Activated CD8-positive, alpha-beta T cell treated with anti-CD3 and anti-CD28 coated beads for 36 hours (primary cell): ENCODE measurements at regions of chr1 and their contacts with region 1.

Region 1: DNA sequence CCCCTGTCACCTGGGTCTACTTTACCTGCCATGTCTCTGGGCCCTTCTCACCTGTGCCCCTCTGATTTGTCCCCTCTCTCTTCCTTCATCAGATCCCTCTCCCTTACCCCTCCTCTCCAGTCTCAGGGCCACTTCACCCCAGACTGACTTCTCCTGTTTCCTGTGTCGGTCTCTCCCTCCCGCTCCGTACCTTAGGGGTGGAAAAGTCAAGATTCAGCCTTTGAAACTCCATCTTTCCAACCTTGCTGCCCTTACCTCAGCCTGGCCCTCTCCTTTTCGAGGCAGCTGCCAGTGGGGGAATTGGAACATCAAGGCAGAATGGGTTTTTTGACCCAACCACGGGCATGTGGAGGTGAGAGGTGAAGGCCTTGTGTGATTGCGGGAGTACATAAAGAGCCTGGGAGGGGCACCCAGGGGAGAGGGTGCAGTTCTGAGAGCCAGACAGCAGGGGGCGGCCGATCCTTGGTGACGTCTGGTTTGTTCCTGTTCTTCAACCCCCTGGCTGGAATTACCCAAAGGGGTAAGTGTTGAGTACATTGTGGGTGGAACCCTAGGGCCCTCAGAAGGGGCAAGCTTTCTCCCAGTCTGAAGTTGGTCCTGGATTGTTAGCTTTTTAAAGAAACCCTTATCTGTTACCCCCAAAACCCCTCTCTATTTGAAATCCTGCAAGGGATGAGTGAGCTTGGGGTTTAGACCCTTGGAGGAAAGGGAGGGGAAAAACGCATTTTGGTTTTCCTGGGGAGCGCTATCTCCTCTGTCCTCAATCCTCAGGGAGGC is 12.3 kb upstream of the DMBX1 start:
- DNase-seq: peak; percentile 86
- ATAC-seq: peak; percentile 99
- H3K4me3 Mint-ChIP-seq: no peak overlapping the region
- H3K27ac Mint-ChIP-seq: no peak overlapping the region
- H3K4me1 Mint-ChIP-seq: no peaks in the 10 kb centered on the region
- H3K27me3 Mint-ChIP-seq: peaks cover 17% of the 10 kb centered on the region
- CTCF ChIP-seq: peak; percentile 92

Region 2: DNA sequence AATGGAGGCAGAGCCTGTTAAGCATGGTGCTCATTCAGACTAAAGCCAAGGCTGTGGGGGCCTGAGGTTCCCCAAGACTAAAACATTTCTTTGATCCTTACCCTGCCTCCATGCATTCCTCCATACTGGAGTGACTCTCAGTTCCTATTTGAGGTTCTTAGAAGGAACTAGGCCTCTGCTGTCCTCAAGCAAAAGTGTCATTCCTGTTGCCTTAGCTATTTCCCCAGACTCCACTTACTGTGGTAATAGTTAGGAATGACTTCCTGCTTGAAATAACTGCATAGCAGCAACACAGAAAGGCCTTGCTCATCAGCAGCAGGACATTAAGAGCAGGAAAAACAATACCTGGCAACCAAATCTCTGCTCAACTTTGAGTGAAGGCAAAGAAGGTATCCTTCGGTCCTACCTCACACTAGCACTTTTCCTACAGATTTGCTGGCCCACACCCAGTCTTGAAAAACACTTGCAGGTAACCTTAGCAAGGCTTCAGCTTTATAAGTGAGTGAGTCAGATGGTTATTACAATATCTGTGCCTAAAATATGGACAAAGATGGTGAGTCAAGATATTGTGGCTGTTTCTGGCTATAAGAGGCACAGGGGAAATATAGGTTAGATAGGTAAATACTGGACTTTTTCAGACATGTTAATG is 188.7 kb before region 1 on chr1:
- CTCF ChIA-PET with region 1: no interaction called
- POLR2A ChIA-PET with region 1: no interaction called
- intact Hi-C with region 1: no loop called
- DNase-seq: no peak
- ATAC-seq: no peak
- H3K4me3 Mint-ChIP-seq: no peak overlapping the region
- H3K27ac Mint-ChIP-seq: peak overlapping the region; percentile 40
- H3K4me1 Mint-ChIP-seq: peaks cover 20% of the 10 kb centered on the region
- H3K27me3 Mint-ChIP-seq: no peaks in the 10 kb centered on the region
- CTCF ChIP-seq: no peak

Region 3: GRCh38 chr1:46489638-46490405 is 12.5 kb after region 1 on chr1 and contains the start of gene DMBX1:
- CTCF ChIA-PET with region 1: interaction called, 14 read pairs
- POLR2A ChIA-PET with region 1: no interaction called
- intact Hi-C with region 1: no loop called
- DNase-seq: peak; percentile 51
- ATAC-seq: peak; percentile 59
- H3K4me3 Mint-ChIP-seq: peak within 1 kb of the TSS; percentile 48
- H3K27ac Mint-ChIP-seq: no peak within 1 kb of the TSS
- H3K4me1 Mint-ChIP-seq: peaks cover 35% of the 10 kb centered on the region
- H3K27me3 Mint-ChIP-seq: peaks cover 83% of the 10 kb centered on the region
- CTCF ChIP-seq: no peak
- total RNA-seq, gene DMBX1: 0.09 TPM in 1 of 2 experiments, not detected in the other

Region 4: DNA sequence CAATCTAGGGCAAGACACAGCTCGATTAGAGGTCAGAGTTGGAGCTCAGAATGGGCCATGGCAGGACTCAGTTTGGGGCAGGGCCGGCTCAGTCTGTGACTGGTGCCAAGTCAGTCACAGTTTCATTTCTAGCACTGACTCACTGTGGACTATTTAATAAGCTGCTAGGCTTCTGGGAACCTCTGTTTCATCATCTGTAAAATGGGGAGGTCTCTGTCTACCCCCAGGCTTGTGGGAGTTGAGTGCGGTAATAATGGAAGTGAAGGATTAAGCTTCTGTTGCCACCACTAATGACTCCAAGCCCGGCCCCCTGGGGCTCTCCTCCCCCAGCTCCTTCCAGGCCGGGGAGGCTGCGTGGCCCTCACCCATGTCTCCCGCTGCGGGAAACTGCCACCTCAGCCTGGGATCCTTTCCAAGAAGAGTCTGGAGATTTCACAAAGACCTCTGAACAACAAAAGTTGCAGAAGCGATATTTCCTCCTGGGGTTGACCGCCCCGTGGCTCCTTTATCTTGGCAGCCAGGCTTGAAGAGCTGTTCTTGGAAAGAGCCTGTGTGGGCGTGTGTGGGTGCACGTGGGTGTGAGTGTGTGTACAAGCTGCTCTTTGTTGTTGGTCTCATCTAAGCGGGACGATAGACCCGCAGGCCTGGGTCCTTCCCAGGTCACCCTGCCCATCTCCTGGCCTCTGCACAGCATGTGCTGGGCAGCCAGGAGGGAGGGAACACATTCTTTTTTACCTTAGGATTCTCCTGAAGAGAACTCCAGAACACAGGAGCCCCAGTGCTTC is 45.0 kb after region 1 on chr1:
- CTCF ChIA-PET with region 1: interaction called, 77 read pairs
- POLR2A ChIA-PET with region 1: interaction called, 6 read pairs
- intact Hi-C with region 1: no loop called
- DNase-seq: peak; percentile 61
- ATAC-seq: peak; percentile 97
- H3K4me3 Mint-ChIP-seq: no peak overlapping the region
- H3K27ac Mint-ChIP-seq: peak overlapping the region; percentile 75
- H3K4me1 Mint-ChIP-seq: peaks cover 13% of the 10 kb centered on the region
- H3K27me3 Mint-ChIP-seq: peaks cover 23% of the 10 kb centered on the region
- CTCF ChIP-seq: no peak